Activated CD8-positive, alpha-beta T cell treated with anti-CD3 and anti-CD28 coated beads, Interleukin-2, amount 10 ng/mL, durations not matched to agents 7 days and 5 days (primary cell): ENCODE measurements at regions of chr15 and their contacts with region 1.

Region 1: GRCh38 chr15:40421246-40422157 is 15.9 kb downstream of the IVD start:
- DNase-seq: peak; percentile 86
- ATAC-seq: peak; percentile 99
- H3K4me3 Mint-ChIP-seq: no peak overlapping the region
- H3K27ac Mint-ChIP-seq: no peak overlapping the region
- H3K4me1 Mint-ChIP-seq: peaks cover 8% of the 10 kb centered on the region
- H3K27me3 Mint-ChIP-seq: no peaks in the 10 kb centered on the region

Region 2: GRCh38 chr15:40238532-40239403 is 182.7 kb before region 1 on chr15 and contains the start of gene PAK6:
- CTCF ChIA-PET with region 1: no interaction called
- POLR2A ChIA-PET with region 1: no interaction called
- DNase-seq: peak; percentile 44
- ATAC-seq: peak; percentile 73
- H3K4me3 Mint-ChIP-seq: no peak within 1 kb of the TSS
- H3K27ac Mint-ChIP-seq: no peak within 1 kb of the TSS
- H3K4me1 Mint-ChIP-seq: peaks cover 24% of the 10 kb centered on the region
- H3K27me3 Mint-ChIP-seq: peaks cover 17% of the 10 kb centered on the region
- total RNA-seq, gene PAK6: 1.2 to 1.4 TPM

Region 3: DNA sequence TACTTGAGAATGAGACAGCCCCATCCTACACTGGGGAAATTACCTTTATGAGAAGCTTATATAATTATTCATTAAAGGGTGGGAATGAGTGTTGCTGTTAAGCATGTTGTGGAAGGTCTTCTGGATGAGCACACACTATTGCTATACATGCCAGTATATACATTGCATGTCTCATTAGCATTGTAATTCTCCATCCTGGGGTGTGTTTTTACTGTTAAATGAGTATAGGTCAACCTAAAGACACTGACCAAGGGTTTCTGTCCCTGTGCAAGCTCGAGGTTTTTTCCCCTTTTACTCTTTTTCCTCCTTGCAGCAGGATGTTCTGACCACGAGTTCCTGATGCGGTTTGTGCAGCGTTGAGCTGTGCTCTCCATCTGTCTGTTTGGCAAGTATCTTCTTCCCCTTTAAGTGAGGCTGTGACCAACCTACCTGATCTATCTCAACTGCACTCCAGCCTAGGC is 23.1 kb before region 1 on chr15:
- CTCF ChIA-PET with region 1: interaction called, 38 read pairs
- POLR2A ChIA-PET with region 1: no interaction called
- DNase-seq: peak; percentile 46
- ATAC-seq: peak; percentile 86
- H3K4me3 Mint-ChIP-seq: peak overlapping the region; percentile 61
- H3K27ac Mint-ChIP-seq: peak overlapping the region; percentile 84
- H3K4me1 Mint-ChIP-seq: peaks cover 31% of the 10 kb centered on the region
- H3K27me3 Mint-ChIP-seq: no peaks in the 10 kb centered on the region

Region 4: DNA sequence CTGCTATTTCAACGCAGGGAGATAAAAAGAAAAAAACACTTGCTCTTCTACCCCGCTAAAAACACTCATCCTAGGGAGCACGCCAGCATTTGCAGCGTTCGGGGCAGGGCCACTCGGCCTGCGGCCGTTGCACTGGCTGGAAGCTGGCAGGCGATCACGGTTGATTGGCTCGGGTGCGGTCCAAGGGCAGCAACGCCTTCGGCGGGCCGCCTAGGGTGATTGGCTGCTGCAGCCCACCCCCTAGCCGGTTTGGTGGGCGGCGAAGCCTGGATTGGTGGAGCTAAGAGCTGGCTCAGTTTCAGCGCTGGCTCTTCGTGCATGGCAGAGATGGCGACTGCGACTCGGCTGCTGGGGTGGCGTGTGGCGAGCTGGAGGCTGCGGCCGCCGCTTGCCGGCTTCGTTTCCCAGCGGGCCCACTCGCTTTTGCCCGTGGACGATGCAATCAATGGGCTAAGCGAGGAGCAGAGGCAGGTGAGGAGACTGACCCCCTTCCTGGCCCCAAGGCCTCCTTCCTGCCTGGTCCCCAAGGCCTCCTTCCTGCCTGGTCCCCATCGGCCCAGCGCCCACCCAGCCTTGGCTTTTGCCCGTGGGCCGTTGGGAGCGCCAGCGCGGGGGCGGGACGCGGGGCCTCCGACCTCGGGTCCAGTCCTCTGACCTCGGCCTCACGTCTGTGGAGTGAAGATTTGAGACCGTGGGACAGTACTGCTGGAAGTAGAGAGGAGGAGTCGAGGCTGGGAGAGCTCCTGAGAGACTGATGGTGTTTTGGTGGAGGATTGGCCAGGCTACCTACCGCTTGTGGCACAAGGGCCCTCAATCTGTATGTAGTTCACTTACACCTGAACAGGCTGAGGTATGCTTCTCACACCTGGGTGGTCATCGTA is 15.8 kb before region 1 on chr15 and contains the start of gene IVD:
- CTCF ChIA-PET with region 1: interaction called, 38 read pairs
- POLR2A ChIA-PET with region 1: interaction called, 3 read pairs
- DNase-seq: peak; percentile 95
- ATAC-seq: peak; percentile 100
- H3K4me3 Mint-ChIP-seq: peak within 1 kb of the TSS; percentile 86
- H3K27ac Mint-ChIP-seq: peak within 1 kb of the TSS; percentile 95
- H3K4me1 Mint-ChIP-seq: peaks cover 45% of the 10 kb centered on the region
- H3K27me3 Mint-ChIP-seq: no peaks in the 10 kb centered on the region
- total RNA-seq, gene IVD: 77.7 to 79.9 TPM

Region 5: DNA sequence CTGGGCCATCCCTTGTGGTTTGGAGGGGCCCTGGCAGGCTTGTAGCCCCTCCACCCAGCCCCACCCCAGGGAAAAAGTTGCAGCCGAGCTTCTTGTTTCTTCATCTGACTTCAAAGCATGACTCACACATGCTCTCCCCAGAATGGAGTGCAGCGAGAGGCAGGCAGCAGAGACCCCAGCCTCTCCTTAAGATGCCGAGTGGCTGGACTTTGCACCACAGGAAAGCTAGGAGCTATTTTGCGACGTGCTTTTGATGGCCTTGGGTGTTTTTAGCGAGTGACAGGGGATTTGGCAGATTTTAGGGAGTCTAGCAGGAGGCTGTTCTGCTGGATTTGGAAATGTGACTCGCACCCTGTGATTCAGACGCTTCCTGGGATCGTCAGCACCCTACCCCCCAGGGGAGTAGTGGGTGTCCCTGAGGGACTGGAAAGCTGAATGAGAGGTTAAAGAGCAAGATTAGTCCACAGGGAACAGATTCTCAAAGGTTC is 33.4 kb after region 1 on chr15:
- CTCF ChIA-PET with region 1: interaction called, 13 read pairs
- POLR2A ChIA-PET with region 1: no interaction called
- DNase-seq: no peak
- ATAC-seq: no peak
- H3K4me3 Mint-ChIP-seq: peak overlapping the region; percentile 74
- H3K27ac Mint-ChIP-seq: peak overlapping the region; percentile 96
- H3K4me1 Mint-ChIP-seq: peaks cover 73% of the 10 kb centered on the region
- H3K27me3 Mint-ChIP-seq: no peaks in the 10 kb centered on the region

Region 6: GRCh38 chr15:40633143-40633542 is 211.6 kb after region 1 on chr15:
- CTCF ChIA-PET with region 1: no interaction called
- POLR2A ChIA-PET with region 1: no interaction called
- DNase-seq: no peak
- ATAC-seq: no peak
- H3K4me3 Mint-ChIP-seq: no peak overlapping the region
- H3K27ac Mint-ChIP-seq: no peak overlapping the region
- H3K4me1 Mint-ChIP-seq: no peaks in the 10 kb centered on the region
- H3K27me3 Mint-ChIP-seq: no peaks in the 10 kb centered on the region